Left colon (tissue), 2 donors: ENCODE measurements at regions of chr16 and their contacts with region 1.

Region 1: DNA sequence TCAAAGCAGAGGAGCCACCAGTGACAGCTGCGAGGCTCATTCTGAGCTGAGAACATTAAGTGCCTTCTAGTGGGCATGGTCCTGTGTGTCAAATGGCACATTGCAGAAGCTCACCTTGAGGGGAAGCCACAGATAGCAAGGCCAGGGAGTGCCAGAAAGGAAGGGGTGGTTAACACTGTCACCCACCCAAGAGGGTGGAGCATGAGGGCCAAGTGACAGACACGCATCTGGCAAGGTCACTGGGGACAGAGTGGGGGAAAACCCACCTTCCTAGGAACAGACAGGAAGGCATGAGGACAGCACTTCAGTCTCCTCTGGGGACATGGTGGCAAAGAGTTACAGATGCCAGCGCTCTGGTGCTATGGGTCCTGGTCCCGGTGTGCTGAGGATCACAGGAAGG is 22.1 kb downstream of the NUBP1 start:
- DNase-seq: no peak
- ATAC-seq: no peak

Region 2: GRCh38 chr16:10683170-10683569 is 82.6 kb before region 1 on chr16:
- intact Hi-C with region 1: no loop called
- DNase-seq: no peak
- ATAC-seq: peak; percentile 31

Region 3: DNA sequence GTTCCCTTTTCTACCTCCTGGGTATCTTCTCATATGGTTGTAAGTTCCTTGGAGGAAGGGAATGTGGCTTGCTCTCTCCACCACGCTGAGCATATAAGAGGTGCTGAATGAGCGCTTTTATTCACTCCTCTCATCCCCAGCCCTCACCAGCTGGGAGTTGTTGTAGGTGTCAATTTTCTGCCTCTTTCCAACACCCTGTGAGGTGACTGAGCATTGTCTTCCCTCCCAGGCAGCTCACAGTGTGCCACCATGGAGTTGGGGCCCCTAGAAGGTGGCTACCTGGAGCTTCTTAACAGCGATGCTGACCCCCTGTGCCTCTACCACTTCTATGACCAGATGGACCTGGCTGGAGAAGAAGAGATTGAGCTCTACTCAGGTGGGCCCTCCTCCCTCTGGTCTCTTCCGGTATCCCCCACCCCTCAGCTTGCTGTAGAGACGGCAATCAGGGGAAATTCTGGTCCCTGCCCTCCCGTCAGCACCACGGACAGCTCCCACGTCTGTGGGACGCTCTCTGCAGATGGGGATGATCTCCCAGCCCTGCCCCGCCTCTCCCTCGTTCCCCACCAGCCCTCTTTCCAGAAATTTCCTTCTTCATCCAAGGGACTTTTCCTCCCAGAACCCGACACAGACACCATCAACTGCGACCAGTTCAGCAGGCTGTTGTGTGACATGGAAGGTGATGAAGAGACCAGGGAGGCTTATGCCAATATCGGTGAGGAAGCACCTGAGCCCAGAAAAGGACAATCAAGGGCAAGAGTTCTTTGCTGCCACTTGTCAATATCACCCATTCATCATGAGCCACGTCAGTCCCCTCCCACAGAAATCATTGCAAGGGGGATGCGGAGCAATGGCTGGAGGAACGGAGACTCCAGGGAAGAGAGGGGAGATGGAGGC is 129.5 kb after region 1 on chr16:
- intact Hi-C with region 1: loop called in 1 of 2 experiments (anchors 10 kb)
- DNase-seq: peak in 1 of 2 donors; percentile 73
- ATAC-seq: no peak

Region 4: DNA sequence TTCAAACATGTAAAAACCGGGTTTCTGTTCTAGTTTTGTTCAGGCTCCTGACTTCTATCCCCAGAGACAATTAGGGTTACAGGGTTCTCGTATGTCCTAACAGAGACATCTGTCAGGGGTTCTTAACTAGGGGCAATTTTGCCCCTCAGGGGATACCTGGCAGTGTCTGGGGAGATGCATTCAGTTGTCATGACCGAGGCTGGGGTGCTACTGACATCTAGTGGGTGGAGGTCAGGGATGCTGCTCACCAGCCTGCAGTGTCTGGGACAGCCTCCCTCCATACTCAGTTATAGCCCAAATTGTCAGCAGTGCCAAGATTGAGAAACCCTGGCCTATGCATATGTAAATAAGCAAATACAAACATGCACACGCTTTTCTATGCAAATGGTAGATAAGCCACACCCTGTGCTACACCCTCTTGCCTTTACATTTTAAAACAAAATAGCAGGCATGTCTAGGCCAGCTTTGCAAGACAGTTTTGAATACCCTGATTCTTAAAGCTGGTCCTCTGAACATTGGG is 216.0 kb after region 1 on chr16:
- intact Hi-C with region 1: no loop called
- DNase-seq: no peak
- ATAC-seq: peak; percentile 54